CD8-positive, alpha-beta memory T cell (primary cell): ENCODE measurements at regions of chr6 and their contacts with region 1.

Region 1: GRCh38 chr6:89638320-89639195 is at the start of gene LYRM2:
- DNase-seq: peak; percentile 83 to 94 (median 91)
- H3K4me3 ChIP-seq: peak within 1 kb of the TSS; percentile 92
- H3K4me3 Mint-ChIP-seq: peak within 1 kb of the TSS; percentile 88 to 99 (median 95)
- H3K27ac ChIP-seq: peak within 1 kb of the TSS; percentile 96
- H3K27ac Mint-ChIP-seq: peak within 1 kb of the TSS; percentile 95 to 100 (median 99)
- H3K4me1 ChIP-seq: peaks cover 14% of the 10 kb centered on the region
- H3K4me1 Mint-ChIP-seq: peaks cover 26 to 42% (median 38%) of the 10 kb centered on the region in 3 donors
- H3K27me3 ChIP-seq: no peaks in the 10 kb centered on the region
- H3K27me3 Mint-ChIP-seq: no peaks in the 10 kb centered on the region
- total RNA-seq, gene LYRM2: 42.8 to 46.2 TPM

Region 2: DNA sequence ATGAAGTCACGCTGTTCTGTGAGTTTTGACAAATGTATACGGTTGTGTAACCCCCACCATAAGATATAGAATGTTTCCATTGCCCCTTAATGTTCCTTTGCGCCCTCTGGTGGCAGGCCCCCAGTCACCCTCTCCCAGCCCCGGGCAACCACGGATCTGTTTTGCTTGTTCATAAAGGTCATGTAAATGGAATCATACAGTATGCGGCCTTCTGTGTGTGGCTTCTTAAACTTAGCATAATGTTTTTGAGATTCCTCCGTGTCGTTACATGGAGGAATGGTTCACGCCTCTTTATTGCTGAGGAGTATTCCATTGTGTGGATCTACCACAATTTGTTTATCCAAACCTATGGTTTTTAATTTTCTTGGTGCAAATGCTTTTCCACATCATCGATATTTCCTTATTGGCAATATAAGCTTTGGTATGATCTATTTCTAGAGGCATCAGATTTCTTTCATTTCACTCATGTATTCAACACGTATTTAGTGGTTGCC is 28.4 kb before region 1 on chr6:
- CTCF ChIA-PET with region 1: interaction called, 13 read pairs
- POLR2A ChIA-PET with region 1: no interaction called
- DNase-seq: peak; percentile 61 to 83 (median 71)
- H3K4me3 ChIP-seq: no peak overlapping the region
- H3K4me3 Mint-ChIP-seq: no peak overlapping the region
- H3K27ac ChIP-seq: no peak overlapping the region
- H3K27ac Mint-ChIP-seq: no peak overlapping the region
- H3K4me1 ChIP-seq: no peaks in the 10 kb centered on the region
- H3K4me1 Mint-ChIP-seq: peaks cover 0 to 5% (median 0%) of the 10 kb centered on the region in 3 donors
- H3K27me3 ChIP-seq: no peaks in the 10 kb centered on the region
- H3K27me3 Mint-ChIP-seq: no peaks in the 10 kb centered on the region